WTC11 (cell line): ENCODE measurements at regions of chr13 and their contacts with region 1.

Region 1: GRCh38 chr13:45807520-45808099 is 43.9 kb downstream of the SIAH3 start:
- DNase-seq: peak; percentile 40
- ATAC-seq: peak; percentile 88
- H3K4me3 Mint-ChIP-seq: no peak overlapping the region
- H3K27ac Mint-ChIP-seq: no peak overlapping the region
- H3K4me1 Mint-ChIP-seq: no peaks in the 10 kb centered on the region
- H3K27me3 Mint-ChIP-seq: no peaks in the 10 kb centered on the region; the same call in 1 of the 2 replicates
- CTCF ChIP-seq: no peak

Region 2: GRCh38 chr13:45417790-45418534 is 389.6 kb before region 1 on chr13 and contains the start of gene SLC25A30:
- CTCF ChIA-PET with region 1: no interaction called
- POLR2A ChIA-PET with region 1: no interaction called
- DNase-seq: peak; percentile 96
- ATAC-seq: peak; percentile 97
- H3K4me3 Mint-ChIP-seq: peak within 1 kb of the TSS; percentile 86
- H3K27ac Mint-ChIP-seq: peak within 1 kb of the TSS; percentile 93
- H3K4me1 Mint-ChIP-seq: peaks cover 11% of the 10 kb centered on the region
- H3K27me3 Mint-ChIP-seq: peaks cover 30% of the 10 kb centered on the region
- CTCF ChIP-seq: no peak
- total RNA-seq, gene SLC25A30: 8.2 to 9.8 TPM (median 8.6 TPM) in 3 replicates

Region 3: GRCh38 chr13:45742985-45743384 is 64.6 kb before region 1 on chr13:
- CTCF ChIA-PET with region 1: no interaction called
- POLR2A ChIA-PET with region 1: no interaction called
- DNase-seq: no peak
- ATAC-seq: no peak
- H3K4me3 Mint-ChIP-seq: no peak overlapping the region
- H3K27ac Mint-ChIP-seq: no peak overlapping the region
- H3K4me1 Mint-ChIP-seq: no peaks in the 10 kb centered on the region
- H3K27me3 Mint-ChIP-seq: no peaks in the 10 kb centered on the region
- CTCF ChIP-seq: no peak

Region 4: GRCh38 chr13:45879670-45880069 is 72.1 kb after region 1 on chr13:
- CTCF ChIA-PET with region 1: interaction called, 24 read pairs
- POLR2A ChIA-PET with region 1: no interaction called
- DNase-seq: peak; percentile 50
- ATAC-seq: peak; percentile 77
- H3K4me3 Mint-ChIP-seq: no peak overlapping the region
- H3K27ac Mint-ChIP-seq: no peak overlapping the region
- H3K4me1 Mint-ChIP-seq: peaks cover 23% of the 10 kb centered on the region
- H3K27me3 Mint-ChIP-seq: peaks cover 76% of the 10 kb centered on the region
- CTCF ChIP-seq: no peak

Region 5: DNA sequence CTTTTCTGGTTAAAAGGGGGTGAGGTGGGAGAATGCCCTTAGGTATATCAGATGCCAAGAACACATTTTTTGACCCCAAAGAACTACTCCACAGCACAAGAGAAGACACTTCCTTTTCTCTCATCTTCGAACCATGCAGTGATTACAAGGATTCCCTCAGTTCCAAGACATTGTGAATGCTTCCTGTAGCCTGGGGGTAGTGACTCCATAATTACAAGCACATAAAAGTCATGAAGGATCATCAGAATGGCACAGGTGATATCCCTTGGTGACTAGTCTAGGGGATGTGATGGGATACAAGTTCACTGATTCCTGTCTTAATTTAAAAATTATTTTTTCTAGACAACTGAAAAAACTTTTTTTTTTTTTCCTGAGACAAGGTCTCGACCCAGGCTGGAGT is 166.9 kb after region 1 on chr13:
- CTCF ChIA-PET with region 1: no interaction called
- POLR2A ChIA-PET with region 1: no interaction called
- DNase-seq: no peak
- ATAC-seq: no peak
- H3K4me3 Mint-ChIP-seq: no peak overlapping the region
- H3K27ac Mint-ChIP-seq: no peak overlapping the region
- H3K4me1 Mint-ChIP-seq: peaks cover 5% of the 10 kb centered on the region; the same call in 1 of the 2 replicates
- H3K27me3 Mint-ChIP-seq: no peaks in the 10 kb centered on the region
- CTCF ChIP-seq: no peak

Region 6: GRCh38 chr13:46010148-46010547 is 202.5 kb after region 1 on chr13:
- CTCF ChIA-PET with region 1: interaction called, 27 read pairs
- POLR2A ChIA-PET with region 1: no interaction called
- DNase-seq: no peak
- ATAC-seq: peak; percentile 32; the same call in 1 of the 2 replicates
- H3K4me3 Mint-ChIP-seq: no peak overlapping the region
- H3K27ac Mint-ChIP-seq: no peak overlapping the region
- H3K4me1 Mint-ChIP-seq: no peaks in the 10 kb centered on the region
- H3K27me3 Mint-ChIP-seq: no peaks in the 10 kb centered on the region
- CTCF ChIP-seq: no peak